Heart left ventricle (tissue), 16 donors: ENCODE measurements at regions of chr20 and their contacts with region 1.

Region 1: DNA sequence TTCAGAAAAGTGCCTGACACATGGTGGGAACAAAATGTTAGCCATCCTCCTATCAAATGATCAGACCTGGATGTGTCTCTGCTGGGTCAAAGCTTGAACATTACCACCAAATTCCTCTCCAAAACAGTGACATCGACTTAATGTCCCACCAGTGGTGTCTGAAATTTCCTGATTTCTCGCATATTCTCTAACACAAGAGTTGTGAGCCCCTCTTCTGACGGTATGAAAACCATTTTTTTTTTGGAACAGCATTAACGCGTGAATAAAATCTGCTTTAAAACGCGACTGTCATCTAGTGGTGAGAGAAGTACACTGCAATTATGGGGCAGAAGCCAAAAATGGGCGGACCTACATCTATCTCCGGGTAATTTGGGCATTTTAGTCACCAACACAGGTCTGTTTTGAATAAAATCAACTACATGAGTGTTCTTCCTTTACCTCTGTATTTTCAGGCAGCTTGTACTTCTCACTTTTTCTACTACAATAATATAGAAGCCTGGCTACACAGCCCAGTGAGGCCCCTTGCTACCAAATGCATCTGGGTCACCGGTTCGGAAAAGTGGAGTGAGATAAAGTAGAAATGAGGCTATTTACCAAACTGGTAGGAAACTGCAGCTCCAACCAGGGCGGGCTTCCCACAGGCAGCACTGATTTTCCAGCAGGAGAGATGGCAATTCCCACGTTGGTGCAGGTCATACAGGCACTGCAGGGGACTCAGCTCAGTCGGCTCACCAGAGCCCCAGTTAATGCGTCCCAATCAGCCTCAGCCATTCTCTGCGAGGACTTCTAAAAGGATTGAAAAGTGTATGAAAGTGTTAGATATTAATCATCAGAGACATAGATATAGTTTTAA is 27.4 kb downstream of the MGME1 start:
- DNase-seq: peak in 2 of 5 donors; percentile 25 to 38
- ATAC-seq: peak in 3 of 4 donors; percentile 52 to 82 (median 77)
- H3K4me3 ChIP-seq: no peak overlapping the region
- H3K27ac ChIP-seq: no peak overlapping the region
- H3K4me1 ChIP-seq: peaks cover 0 to 7% (median 0%) of the 10 kb centered on the region in 12 donors
- H3K27me3 ChIP-seq: no peaks in the 10 kb centered on the region
- CTCF ChIP-seq: peak; percentile 94 to 98 (median 96)
- POLR2A ChIP-seq: no peak

Region 2: GRCh38 chr20:17536944-17537444 is 459.2 kb before region 1 on chr20:
- intact Hi-C with region 1: loop called in 5 of 10 experiments (anchors 10 kb)
- DNase-seq: peak in 4 of 5 donors; percentile 54 to 75 (median 69)
- ATAC-seq: peak; percentile 93 to 99 (median 98)
- H3K4me3 ChIP-seq: no peak overlapping the region
- H3K27ac ChIP-seq: peak overlapping the region in 2 of 12 donors; percentile 7 to 64
- H3K4me1 ChIP-seq: peaks cover 0 to 11% (median 0%) of the 10 kb centered on the region in 12 donors
- H3K27me3 ChIP-seq: no peaks in the 10 kb centered on the region
- CTCF ChIP-seq: peak; percentile 72 to 93 (median 88)
- POLR2A ChIP-seq: no peak

Region 3: GRCh38 chr20:17662333-17663039 is 333.7 kb before region 1 on chr20:
- intact Hi-C with region 1: loop called in 1 of 10 experiments (anchors 10 kb)
- DNase-seq: peak in 1 of 5 donors; percentile 60
- ATAC-seq: peak in 3 of 4 donors; percentile 79 to 89 (median 85)
- H3K4me3 ChIP-seq: no peak overlapping the region
- H3K27ac ChIP-seq: peak overlapping the region in 5 of 12 donors; percentile 13 to 62 (median 33)
- H3K4me1 ChIP-seq: peaks cover 0 to 74% (median 33%) of the 10 kb centered on the region in 12 donors
- H3K27me3 ChIP-seq: no peaks in the 10 kb centered on the region
- CTCF ChIP-seq: no peak
- POLR2A ChIP-seq: no peak

Region 4: DNA sequence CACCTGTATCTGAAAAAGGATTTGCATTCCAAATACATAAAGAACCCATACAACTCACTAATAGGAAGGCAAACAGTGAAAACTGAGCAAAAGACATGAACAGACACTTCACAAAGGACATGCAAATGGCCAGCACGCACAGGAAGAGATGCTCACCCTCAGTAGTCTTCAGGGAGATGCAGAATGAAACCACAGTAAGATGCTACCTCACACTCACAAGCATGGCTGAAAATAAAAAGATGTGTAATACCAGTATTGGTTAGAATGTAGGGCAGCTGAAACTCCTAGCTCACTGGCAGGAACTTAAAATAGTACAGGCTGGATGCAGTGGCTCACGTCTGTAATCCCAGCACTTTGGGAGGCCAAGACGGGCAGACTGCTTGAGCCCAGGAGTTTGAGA is 92.2 kb before region 1 on chr20:
- intact Hi-C with region 1: loop called in 1 of 10 experiments (anchors 5 kb)
- DNase-seq: no peak
- ATAC-seq: no peak
- H3K4me3 ChIP-seq: no peak overlapping the region
- H3K27ac ChIP-seq: no peak overlapping the region
- H3K4me1 ChIP-seq: no peaks in the 10 kb centered on the region
- H3K27me3 ChIP-seq: no peaks in the 10 kb centered on the region
- CTCF ChIP-seq: no peak
- POLR2A ChIP-seq: no peak

Region 5: DNA sequence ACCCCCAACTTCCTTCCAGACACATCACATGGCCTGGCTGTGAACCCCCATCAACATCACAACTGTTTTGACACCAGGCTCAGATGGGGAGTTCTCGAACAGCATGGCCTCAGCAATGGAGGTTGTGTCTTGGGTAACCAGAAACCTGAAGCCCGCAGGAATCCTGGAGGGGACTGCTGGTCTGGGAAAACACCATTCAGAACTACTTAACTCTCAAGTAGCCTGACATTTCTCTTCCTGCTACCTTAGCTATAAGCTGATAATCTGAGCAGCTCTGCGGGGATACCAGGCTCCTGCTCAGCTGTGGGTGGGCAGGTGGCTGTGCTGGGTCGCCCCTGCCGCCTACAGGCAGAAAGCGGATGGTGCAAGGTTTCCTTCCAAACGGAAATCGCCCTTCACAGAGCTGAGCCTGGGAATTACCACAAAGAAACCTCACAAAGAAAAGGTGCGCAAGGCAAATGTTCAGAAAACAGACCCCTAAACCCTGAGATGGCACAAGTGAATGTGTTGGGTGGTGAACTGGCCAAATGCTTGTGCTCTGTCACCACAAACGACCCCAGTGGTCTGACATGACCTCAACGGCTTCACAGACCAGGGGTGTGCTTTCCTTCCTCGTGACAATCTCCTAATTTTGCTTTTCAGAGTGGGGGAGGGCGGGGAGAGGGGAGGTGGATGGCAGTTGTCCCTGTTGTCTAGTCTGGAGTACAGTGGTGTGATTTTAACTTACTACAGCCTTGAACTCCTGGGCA is 57.1 kb before region 1 on chr20:
- intact Hi-C with region 1: no loop called
- DNase-seq: peak in 4 of 5 donors; percentile 53 to 69 (median 66)
- ATAC-seq: peak; percentile 47 to 83 (median 78)
- H3K4me3 ChIP-seq: no peak overlapping the region
- H3K27ac ChIP-seq: peak overlapping the region in 2 of 12 donors; percentile 37 to 38
- H3K4me1 ChIP-seq: peaks cover 0 to 57% (median 24%) of the 10 kb centered on the region in 12 donors
- H3K27me3 ChIP-seq: no peaks in the 10 kb centered on the region
- CTCF ChIP-seq: peak; percentile 80 to 91 (median 88)
- POLR2A ChIP-seq: no peak